Psoas muscle (tissue), 8 donors: ENCODE measurements at regions of chr2 and their contacts with region 1.

Region 1: DNA sequence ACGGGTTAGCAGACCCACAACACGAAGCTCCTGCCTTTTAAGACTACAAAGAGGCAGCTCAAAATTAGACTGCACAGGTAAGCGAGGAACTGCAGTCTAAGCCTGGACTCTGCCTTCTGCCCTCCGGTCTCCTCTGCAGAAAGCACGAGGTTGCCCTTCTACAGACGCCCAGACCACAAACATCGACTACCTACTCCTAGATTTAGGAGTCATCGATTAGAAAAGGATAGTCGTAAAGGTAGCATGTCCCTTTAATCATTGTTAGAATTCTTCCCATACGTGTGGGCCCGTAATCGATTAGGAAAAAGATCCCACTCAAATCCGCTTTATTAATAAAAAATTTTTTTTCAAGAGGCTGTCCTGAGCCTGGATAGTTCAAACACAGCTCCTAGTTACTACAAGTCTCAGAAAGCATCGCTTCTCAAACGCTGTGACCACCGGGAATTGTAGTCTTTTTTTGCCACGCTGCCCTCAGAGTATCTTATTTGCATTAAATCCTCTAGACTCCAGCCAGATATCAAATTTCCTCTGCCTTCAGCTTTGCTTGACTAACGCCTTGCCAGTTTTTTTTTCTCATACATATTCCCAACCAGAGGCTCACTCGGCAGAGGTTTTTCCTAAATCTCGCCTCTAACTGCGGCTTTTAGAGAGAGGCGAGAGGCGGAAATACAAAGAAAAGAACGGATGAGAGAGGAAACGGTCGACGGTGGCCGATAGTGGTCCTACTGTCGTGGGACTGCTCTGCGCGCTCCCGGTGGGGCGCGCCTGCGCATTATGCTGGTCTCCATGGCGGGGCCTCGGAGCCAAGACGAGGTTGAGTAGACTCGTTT is at the starts of genes CARF and WDR12:
- DNase-seq: peak; percentile 94 to 95
- ATAC-seq: peak; percentile 97 to 98 (median 97)
- H3K4me3 ChIP-seq: peak within 1 kb of the TSS; percentile 67
- H3K27ac ChIP-seq: peak within 1 kb of the TSS; percentile 89
- H3K4me1 ChIP-seq: peaks cover 23% of the 10 kb centered on the region
- H3K27me3 ChIP-seq: no peaks in the 10 kb centered on the region
- CTCF ChIP-seq: no peak
- total RNA-seq, gene CARF: 4.5 to 7.7 (median 5.1) TPM
- total RNA-seq, gene WDR12: 39.3 to 69.8 (median 51.3) TPM

Region 2: DNA sequence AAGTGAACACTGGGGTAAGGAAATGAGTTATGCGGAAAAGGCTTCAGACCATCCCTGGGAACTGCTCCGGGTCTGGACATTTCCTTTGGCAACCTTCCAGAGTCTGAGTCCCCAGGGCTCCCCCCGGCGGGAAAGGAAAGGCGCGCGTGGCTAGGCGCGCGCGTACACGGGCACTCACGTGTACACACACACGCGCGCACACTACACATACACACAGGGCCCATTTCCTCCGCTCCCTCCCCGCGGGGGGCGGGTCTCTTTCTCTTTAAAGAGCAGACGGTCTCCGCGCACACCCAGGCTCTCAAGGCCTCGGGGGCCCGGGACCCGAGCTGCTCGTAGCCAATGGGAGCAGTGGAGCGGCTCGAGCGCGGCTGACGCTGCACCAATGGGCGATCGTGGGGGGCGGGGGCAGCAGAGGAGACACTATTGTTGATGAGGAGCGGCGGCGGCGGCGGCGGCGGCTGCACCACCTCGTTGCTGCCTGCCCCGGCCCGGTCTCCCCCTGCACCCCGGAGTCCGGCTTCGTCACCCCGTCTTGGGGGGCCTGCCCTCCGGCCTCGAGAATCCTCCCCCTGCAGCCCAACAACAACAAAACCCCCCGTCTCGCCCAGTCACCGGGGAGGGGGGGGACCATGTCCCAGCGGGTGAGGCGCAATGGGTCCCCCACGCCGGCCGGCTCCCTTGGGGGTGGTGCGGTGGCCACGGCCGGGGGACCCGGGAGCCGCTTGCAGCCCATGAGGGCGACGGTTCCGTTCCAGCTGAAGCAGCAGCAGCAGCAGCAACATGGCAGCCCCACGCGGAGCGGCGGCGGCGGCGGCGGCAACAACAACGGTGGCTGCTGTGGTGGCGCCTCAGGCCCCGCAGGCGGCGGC is 276.9 kb before region 1 on chr2 and contains the start of gene FAM117B:
- intact Hi-C with region 1: loop called in 1 of 2 experiments (anchors 5 kb)
- DNase-seq: peak; percentile 99
- ATAC-seq: peak; percentile 98 to 99 (median 98)
- H3K4me3 ChIP-seq: peak within 1 kb of the TSS; percentile 91
- H3K27ac ChIP-seq: peak within 1 kb of the TSS; percentile 87
- H3K4me1 ChIP-seq: no peaks in the 10 kb centered on the region
- H3K27me3 ChIP-seq: no peaks in the 10 kb centered on the region
- CTCF ChIP-seq: no peak
- total RNA-seq, gene FAM117B: 0.75 to 2.4 (median 0.90) TPM

Region 3: DNA sequence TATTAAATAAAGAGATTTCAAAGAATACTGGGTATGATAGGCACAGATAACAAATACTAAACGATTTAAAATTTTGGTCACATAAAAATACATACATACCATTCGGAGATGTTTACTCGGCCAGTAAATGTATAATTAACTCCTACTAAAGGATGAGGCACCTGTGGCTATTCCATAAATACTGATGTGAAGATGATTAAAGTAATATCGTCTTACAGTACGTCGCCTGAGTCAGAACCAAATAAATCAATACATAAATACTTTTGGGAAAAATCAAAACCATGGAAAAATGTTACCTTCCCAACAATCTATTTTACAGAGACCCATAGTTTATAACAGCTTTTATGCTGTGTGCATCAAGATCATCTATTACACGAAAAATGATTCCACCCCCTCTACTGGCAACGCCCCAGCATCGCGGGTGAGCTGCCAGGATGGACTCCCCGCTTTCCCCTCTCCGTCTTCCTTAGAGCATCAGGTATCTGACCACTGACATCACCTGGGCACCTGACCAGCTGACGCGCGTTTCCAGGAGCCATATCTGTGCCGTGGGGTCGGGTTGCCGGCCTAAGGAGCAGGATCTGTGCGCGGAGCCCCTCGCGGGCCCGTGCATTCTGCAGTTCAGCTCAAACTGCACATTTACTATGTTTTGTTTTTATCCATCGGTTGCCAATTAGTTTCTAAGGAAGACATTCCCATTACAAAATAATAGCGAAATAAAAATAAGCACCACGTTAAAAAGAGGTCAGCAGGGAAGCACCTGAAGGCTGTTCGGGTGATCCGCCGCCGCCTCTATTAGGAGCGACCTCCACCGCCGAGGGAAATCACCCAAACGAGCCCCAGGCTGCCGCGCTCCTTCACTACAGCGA is 41.1 kb before region 1 on chr2:
- intact Hi-C with region 1: loop called in 1 of 2 experiments (anchors 5 kb)
- DNase-seq: peak; percentile 54 to 78
- ATAC-seq: peak; percentile 74 to 83 (median 76)
- H3K4me3 ChIP-seq: peak overlapping the region; percentile 86
- H3K27ac ChIP-seq: peak overlapping the region; percentile 77
- H3K4me1 ChIP-seq: peaks cover 5% of the 10 kb centered on the region
- H3K27me3 ChIP-seq: no peaks in the 10 kb centered on the region
- CTCF ChIP-seq: peak; percentile 14

Region 4: GRCh38 chr2:203238704-203239526 is 327.2 kb after region 1 on chr2 and contains the start of gene CYP20A1:
- intact Hi-C with region 1: loop called (anchors 2 to 5 kb)
- DNase-seq: peak; percentile 97 to 98
- ATAC-seq: peak; percentile 97 to 98 (median 98)
- H3K4me3 ChIP-seq: peak within 1 kb of the TSS; percentile 79
- H3K27ac ChIP-seq: peak within 1 kb of the TSS; percentile 95
- H3K4me1 ChIP-seq: peaks cover 16% of the 10 kb centered on the region
- H3K27me3 ChIP-seq: no peaks in the 10 kb centered on the region
- CTCF ChIP-seq: peak; percentile 29
- total RNA-seq, gene CYP20A1: 8.7 to 10.9 (median 9.5) TPM